ENCODE measurements at regions of chr3 and their contacts with region 1.

Region 1: DNA sequence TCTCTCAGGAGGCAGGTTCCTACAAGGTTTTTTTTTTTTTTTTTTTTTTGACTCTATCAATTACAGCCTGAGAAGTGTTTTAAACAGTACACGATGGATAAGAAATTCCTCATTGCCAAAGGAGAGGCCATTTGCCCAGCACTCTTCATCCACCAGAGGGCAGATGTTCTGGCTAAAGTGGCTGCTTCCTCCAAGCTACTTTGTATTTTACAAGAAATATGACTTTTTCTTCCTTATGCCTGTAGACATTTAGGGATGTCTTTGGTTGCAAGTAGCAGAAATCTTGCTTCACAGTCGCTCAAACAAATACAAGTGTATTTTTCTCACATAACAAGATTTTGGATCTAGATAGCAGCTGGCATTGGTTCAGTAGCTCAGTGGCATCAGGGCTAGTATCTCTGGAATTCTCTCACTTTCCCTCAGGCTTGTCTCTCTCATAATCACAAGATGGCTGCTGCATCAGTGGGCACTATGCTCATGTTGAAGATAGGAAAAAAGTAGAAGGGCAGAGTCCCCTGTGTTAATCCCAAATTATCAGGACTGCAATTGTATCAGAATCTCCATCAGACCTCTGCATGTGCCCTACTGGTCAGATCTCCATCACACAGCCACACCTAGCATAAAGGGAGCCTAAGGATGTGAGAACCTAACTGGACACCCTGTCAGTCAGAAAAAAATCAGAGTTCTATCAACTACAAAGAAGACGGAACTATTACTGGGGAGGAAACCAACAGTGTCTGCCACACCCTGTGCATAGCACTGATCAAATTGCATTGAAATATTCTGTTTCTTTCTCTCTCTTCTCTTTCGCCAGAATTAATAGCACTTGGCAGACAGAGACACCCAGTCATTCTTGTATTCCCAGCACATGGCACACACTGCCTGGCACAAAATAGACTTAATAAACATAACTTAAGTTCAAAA is 138.9 kb upstream of the COL8A1 start:
- DNase-seq: peak; percentile 80
- H3K4me3 ChIP-seq: no peak overlapping the region
- H3K27ac ChIP-seq: no peak overlapping the region
- H3K4me1 ChIP-seq: peaks cover 27% of the 10 kb centered on the region
- H3K27me3 ChIP-seq: no peaks in the 10 kb centered on the region
- CTCF ChIP-seq: peak; percentile 71 to 76
- POLR2A ChIP-seq: no peak

Region 2: GRCh38 chr3:99023590-99024192 is 475.8 kb before region 1 on chr3:
- CTCF ChIA-PET with region 1: interaction called, 5 read pairs
- POLR2A ChIA-PET with region 1: no interaction called
- dilution Hi-C with region 1: no loop called
- intact Hi-C with region 1: loop called (anchors 10 kb)
- DNase-seq: peak; percentile 66
- H3K4me3 ChIP-seq: no peak overlapping the region
- H3K27ac ChIP-seq: no peak overlapping the region
- H3K4me1 ChIP-seq: no peaks in the 10 kb centered on the region
- H3K27me3 ChIP-seq: no peaks in the 10 kb centered on the region
- CTCF ChIP-seq: peak; percentile 40 to 46
- POLR2A ChIP-seq: no peak

Region 3: DNA sequence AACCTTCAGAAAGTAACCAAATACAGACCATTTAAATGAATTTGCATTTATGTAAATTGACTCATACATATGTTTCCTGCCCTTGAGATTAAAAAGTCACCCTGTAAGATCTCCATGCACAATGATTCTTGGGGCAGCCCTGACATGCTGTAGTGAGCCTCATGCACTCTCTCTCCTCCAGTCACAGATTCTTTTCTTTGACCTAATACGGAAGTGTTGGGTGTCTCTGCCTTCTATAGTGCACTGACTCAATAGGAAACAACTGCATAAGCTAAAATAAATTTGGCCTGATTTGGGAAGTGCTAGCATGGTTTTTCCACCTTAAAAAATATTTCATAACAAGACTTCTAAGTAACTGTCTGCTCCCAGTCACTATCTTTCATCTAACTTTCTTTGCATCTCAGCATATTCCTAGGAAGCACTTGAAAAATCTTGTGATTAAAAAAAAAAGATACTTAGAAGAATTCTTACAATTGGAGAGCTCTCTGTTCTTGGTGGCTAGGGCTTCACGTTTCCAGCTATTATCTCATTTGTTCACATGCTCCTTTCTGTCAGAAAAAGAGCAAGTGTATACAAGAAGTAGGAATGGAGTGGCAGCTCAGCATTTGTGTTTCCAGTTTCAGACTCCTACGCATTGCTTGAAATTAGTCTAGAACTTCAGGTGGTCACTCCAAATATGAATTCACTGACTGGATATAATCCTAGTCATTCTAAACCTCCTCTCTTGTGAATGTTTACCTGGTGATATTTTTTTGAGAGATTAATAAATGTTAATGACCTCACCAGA is 69.0 kb before region 1 on chr3:
- CTCF ChIA-PET with region 1: no interaction called
- POLR2A ChIA-PET with region 1: no interaction called
- dilution Hi-C with region 1: no loop called
- intact Hi-C with region 1: no loop called
- DNase-seq: peak; percentile 74
- H3K4me3 ChIP-seq: no peak overlapping the region
- H3K27ac ChIP-seq: no peak overlapping the region
- H3K4me1 ChIP-seq: peaks cover 3% of the 10 kb centered on the region
- H3K27me3 ChIP-seq: no peaks in the 10 kb centered on the region
- CTCF ChIP-seq: no peak
- POLR2A ChIP-seq: no peak

Region 4: GRCh38 chr3:99458013-99458412 is 41.5 kb before region 1 on chr3:
- CTCF ChIA-PET with region 1: no interaction called
- POLR2A ChIA-PET with region 1: no interaction called
- dilution Hi-C with region 1: no loop called
- intact Hi-C with region 1: no loop called
- DNase-seq: no peak
- H3K4me3 ChIP-seq: no peak overlapping the region
- H3K27ac ChIP-seq: no peak overlapping the region
- H3K4me1 ChIP-seq: no peaks in the 10 kb centered on the region
- H3K27me3 ChIP-seq: no peaks in the 10 kb centered on the region
- CTCF ChIP-seq: no peak
- POLR2A ChIP-seq: no peak

Region 5: DNA sequence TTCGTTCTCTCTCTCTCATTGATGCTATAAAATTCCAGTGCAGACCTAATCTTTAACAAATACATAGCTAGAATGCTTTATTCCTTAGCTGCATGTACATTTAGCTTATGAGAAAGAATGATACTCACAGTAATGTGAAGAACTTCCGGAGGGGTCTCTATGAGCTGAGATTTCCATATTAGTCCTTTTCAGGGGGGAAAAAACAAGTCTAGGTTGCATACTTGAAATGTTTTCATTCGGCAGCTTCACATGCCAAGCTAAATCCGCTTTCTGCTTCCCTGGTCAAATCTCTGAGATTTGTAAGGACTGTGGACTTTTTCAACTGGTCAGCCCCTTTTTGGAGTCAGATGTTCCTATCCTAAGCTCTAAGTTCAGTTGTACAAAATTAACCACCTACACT is 27.4 kb after region 1 on chr3:
- CTCF ChIA-PET with region 1: interaction called, 61 read pairs
- POLR2A ChIA-PET with region 1: no interaction called
- dilution Hi-C with region 1: no loop called
- intact Hi-C with region 1: loop called (anchors 1 kb)
- DNase-seq: peak; percentile 75
- H3K4me3 ChIP-seq: no peak overlapping the region
- H3K27ac ChIP-seq: no peak overlapping the region
- H3K4me1 ChIP-seq: peaks cover 9% of the 10 kb centered on the region
- H3K27me3 ChIP-seq: no peaks in the 10 kb centered on the region
- CTCF ChIP-seq: no peak
- POLR2A ChIP-seq: no peak

Region 6: DNA sequence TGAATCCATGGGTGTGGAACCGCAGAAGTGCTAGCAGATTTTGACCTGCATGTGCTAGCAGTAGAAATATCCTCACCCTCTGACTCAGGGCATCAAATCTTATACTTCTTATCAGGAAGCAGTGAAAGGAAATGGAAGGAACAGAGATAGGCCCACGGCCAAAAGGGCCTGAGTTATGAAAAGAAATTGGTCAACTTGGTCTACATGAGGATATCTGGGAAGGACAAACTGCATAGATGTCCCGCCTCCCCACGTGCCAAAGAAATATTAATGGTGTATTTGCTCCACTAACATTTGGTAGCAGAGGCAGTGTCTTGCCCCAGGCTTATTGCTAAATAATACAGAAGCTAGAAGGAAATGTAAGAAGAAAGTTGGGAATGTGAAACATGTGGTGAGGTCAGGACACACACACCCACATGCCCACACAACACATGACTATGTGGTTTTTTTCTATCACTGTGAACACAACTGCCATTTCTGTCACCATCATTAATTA is 45.3 kb after region 1 on chr3:
- CTCF ChIA-PET with region 1: interaction called, 13 read pairs
- POLR2A ChIA-PET with region 1: no interaction called
- dilution Hi-C with region 1: no loop called
- intact Hi-C with region 1: no loop called
- DNase-seq: peak; percentile 100
- H3K4me3 ChIP-seq: no peak overlapping the region
- H3K27ac ChIP-seq: peak overlapping the region; percentile 97
- H3K4me1 ChIP-seq: peaks cover 77% of the 10 kb centered on the region
- H3K27me3 ChIP-seq: no peaks in the 10 kb centered on the region
- CTCF ChIP-seq: no peak
- POLR2A ChIP-seq: peak; percentile 55

Region 7: GRCh38 chr3:99638167-99638948 is 138.9 kb after region 1 on chr3 and contains the start of gene COL8A1:
- CTCF ChIA-PET with region 1: interaction called, 58 read pairs
- POLR2A ChIA-PET with region 1: interaction called, 3 read pairs
- dilution Hi-C with region 1: no loop called
- intact Hi-C with region 1: loop called (anchors 1 kb)
- DNase-seq: peak; percentile 94
- H3K4me3 ChIP-seq: peak within 1 kb of the TSS; percentile 90 to 94 (median 91)
- H3K27ac ChIP-seq: peak within 1 kb of the TSS; percentile 100
- H3K4me1 ChIP-seq: peaks cover 72% of the 10 kb centered on the region
- H3K27me3 ChIP-seq: no peaks in the 10 kb centered on the region
- CTCF ChIP-seq: no peak
- POLR2A ChIP-seq: peak; percentile 94
- total RNA-seq, gene COL8A1: 217 and 358 TPM in 2 replicates

Region 8: DNA sequence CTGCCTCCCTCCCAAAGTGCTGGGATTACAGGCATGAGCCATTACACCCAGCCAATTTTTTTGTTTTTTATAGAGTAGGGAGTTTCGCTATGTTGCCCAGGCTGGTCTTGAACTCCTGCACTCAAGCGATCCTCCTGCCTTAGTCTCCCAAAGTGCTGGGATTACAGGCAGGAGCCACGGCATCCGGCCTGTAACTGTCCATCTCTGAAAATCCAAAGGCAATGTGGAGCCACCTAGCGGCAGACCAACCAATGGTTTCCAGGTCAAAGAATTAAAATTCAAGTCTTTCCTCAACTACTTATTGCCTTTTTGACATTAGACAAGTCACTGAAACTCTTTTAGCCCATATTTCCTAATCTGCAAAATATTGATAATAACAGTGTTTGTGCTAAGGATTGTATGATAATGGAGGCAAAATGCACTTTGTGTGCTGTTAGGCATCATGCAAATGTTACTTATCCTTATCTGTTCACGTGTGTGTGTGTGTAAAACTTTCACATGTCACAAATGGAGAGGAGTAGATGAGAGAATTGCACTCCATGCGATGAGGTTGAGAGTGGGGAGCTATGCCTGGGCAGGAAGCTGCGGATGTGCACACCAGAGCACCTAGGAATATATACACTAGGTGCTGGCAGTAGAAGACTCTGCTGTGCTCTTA is 187.6 kb after region 1 on chr3:
- CTCF ChIA-PET with region 1: interaction called, 15 read pairs
- POLR2A ChIA-PET with region 1: no interaction called
- dilution Hi-C with region 1: no loop called
- intact Hi-C with region 1: loop called (anchors 1 kb)
- DNase-seq: peak; percentile 71
- H3K4me3 ChIP-seq: no peak overlapping the region
- H3K27ac ChIP-seq: no peak overlapping the region
- H3K4me1 ChIP-seq: peaks cover 11% of the 10 kb centered on the region
- H3K27me3 ChIP-seq: no peaks in the 10 kb centered on the region
- CTCF ChIP-seq: peak; percentile 54 to 55
- POLR2A ChIP-seq: peak; percentile 4

Region 9: DNA sequence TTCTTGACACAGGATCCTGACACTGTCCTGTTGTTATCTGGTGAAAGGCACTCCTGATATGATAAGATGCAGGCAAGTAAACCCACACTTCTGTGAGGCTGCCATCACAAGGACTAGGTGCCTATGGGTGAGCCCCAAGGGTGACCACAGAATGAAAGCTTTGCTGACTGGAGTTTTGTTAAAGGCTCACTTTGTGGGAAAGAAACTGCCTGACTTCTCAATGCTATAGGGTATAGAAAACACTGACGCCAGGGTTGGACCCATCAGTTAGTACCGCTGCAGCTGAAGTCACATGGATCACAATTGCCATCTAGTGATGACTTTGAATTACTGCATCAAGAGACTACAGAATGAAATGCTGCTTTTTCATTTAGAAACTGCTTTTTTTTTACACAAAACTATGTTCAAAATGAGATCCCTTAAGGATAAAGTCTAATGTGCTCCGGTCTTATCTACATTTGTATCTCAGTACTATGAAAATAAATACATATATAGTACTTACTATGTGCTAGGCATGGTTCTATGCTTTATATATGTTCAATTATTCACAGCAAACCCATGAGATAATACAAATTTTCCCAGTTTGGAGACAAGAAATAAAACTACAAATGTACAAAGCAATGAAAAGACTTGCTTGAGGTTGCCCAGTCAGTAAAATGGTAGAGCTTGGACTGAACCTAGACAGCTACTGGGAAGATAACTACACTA is 253.9 kb after region 1 on chr3:
- CTCF ChIA-PET with region 1: interaction called, 61 read pairs
- POLR2A ChIA-PET with region 1: no interaction called
- dilution Hi-C with region 1: no loop called
- intact Hi-C with region 1: loop called (anchors 1 kb)
- DNase-seq: peak; percentile 77
- H3K4me3 ChIP-seq: no peak overlapping the region
- H3K27ac ChIP-seq: peak overlapping the region; percentile 21
- H3K4me1 ChIP-seq: peaks cover 28% of the 10 kb centered on the region
- H3K27me3 ChIP-seq: no peaks in the 10 kb centered on the region
- CTCF ChIP-seq: peak; percentile 56 to 58
- POLR2A ChIP-seq: no peak

Measured in endothelial cell of umbilical vein (primary cell).